ENCODE measurements at regions of chr9 and their contacts with region 1.

Region 1: GRCh38 chr9:125241000-125241862 is at the start of gene HSPA5:
- DNase-seq: peak; percentile 100
- ATAC-seq: peak; percentile 90
- H3K4me3 Mint-ChIP-seq: peak within 1 kb of the TSS; percentile 100
- H3K27ac Mint-ChIP-seq: peak within 1 kb of the TSS; percentile 100
- H3K4me1 Mint-ChIP-seq: peaks cover 45% of the 10 kb centered on the region
- H3K27me3 Mint-ChIP-seq: no peaks in the 10 kb centered on the region
- CTCF ChIP-seq: no peak
- total RNA-seq, gene HSPA5: 161 to 163 TPM

Region 2: GRCh38 chr9:124868511-124869465 is 372.4 kb before region 1 on chr9:
- CTCF ChIA-PET with region 1: no interaction called
- POLR2A ChIA-PET with region 1: interaction called, 20 read pairs
- intact Hi-C with region 1: no loop called
- DNase-seq: peak; percentile 92
- ATAC-seq: peak; percentile 54
- H3K4me3 Mint-ChIP-seq: peak overlapping the region; percentile 94
- H3K27ac Mint-ChIP-seq: peak overlapping the region; percentile 99
- H3K4me1 Mint-ChIP-seq: peaks cover 47% of the 10 kb centered on the region
- H3K27me3 Mint-ChIP-seq: no peaks in the 10 kb centered on the region
- CTCF ChIP-seq: peak; percentile 20

Region 3: DNA sequence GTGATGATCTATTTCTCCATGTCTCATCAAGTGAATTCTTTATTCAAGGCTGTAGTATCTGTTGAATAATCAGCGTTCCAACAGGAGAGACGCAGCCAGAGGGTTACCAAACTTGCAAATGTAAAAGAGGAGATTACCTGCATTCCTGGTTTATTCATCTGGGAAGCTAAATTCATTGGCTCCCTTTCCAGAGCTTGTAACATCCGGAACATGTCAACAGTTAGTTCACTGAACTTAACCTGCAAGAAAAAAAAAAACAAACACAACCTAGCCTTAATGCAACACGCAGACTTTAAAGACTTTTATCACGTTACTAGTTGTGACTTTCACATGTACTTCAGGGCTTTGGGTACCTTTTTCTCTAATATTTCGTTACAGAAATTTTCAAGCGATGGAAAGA is 237.9 kb before region 1 on chr9:
- CTCF ChIA-PET with region 1: no interaction called
- POLR2A ChIA-PET with region 1: no interaction called
- intact Hi-C with region 1: no loop called
- DNase-seq: no peak
- ATAC-seq: no peak
- H3K4me3 Mint-ChIP-seq: no peak overlapping the region
- H3K27ac Mint-ChIP-seq: no peak overlapping the region
- H3K4me1 Mint-ChIP-seq: no peaks in the 10 kb centered on the region
- H3K27me3 Mint-ChIP-seq: no peaks in the 10 kb centered on the region
- CTCF ChIP-seq: no peak

Region 4: GRCh38 chr9:125189361-125190289 is 51.6 kb before region 1 on chr9 and contains the start of gene PPP6C:
- CTCF ChIA-PET with region 1: interaction called, 3 read pairs
- POLR2A ChIA-PET with region 1: interaction called, 11 read pairs
- intact Hi-C with region 1: no loop called
- DNase-seq: peak; percentile 99
- ATAC-seq: peak; percentile 96
- H3K4me3 Mint-ChIP-seq: peak within 1 kb of the TSS; percentile 98
- H3K27ac Mint-ChIP-seq: peak within 1 kb of the TSS; percentile 98
- H3K4me1 Mint-ChIP-seq: peaks cover 54% of the 10 kb centered on the region
- H3K27me3 Mint-ChIP-seq: no peaks in the 10 kb centered on the region
- CTCF ChIP-seq: peak; percentile 75
- total RNA-seq, gene PPP6C: 43.1 to 44.8 TPM

Region 5: DNA sequence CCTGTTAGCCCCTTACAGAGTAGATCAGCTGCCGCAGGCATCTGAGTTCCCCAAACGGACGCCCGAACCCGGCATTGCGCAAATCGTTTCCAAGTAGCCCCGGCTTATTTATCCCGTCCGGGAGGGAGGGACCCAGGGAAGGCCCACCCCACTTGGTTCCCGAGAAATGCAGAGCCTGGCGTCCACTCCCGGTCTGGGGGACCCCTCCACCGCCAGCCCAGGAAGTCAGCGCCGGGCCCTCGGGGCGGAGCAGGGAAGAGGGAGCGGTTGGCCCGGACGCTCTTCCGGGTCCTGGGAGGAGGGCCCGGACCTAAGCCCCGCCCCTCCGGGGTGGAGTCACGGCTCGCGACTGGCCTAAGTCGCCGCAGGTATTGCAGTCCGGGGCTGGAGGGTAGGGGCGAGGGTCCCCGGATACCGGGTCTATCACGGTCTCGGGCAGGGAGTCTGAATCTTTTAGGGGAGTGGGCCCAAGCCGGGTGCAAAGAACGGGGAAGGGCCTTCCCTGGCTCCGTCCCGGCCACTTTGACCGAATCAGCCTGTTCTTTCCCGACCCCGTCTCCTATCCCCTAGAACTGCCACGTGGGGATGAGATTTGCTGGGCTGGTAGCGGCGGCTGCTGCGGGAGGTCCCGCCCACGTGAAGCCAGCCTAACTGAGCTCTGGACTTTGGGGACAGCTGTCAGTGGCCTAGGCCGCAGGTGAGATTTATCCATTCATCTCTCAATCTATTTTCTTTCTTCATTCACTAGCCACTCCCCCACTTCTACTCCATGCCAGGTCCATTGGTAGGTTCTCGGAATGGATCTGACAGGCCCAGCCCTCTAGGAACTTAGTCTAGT is 40.8 kb before region 1 on chr9 and contains the start of gene RABEPK:
- CTCF ChIA-PET with region 1: no interaction called
- POLR2A ChIA-PET with region 1: interaction called, 16 read pairs
- intact Hi-C with region 1: no loop called
- DNase-seq: peak; percentile 92
- ATAC-seq: peak; percentile 98
- H3K4me3 Mint-ChIP-seq: peak within 1 kb of the TSS; percentile 97
- H3K27ac Mint-ChIP-seq: peak within 1 kb of the TSS; percentile 91
- H3K4me1 Mint-ChIP-seq: peaks cover 36% of the 10 kb centered on the region
- H3K27me3 Mint-ChIP-seq: no peaks in the 10 kb centered on the region
- CTCF ChIP-seq: no peak
- total RNA-seq, gene RABEPK: 30.0 to 30.4 TPM

Region 6: GRCh38 chr9:125227761-125228160 is 13.5 kb before region 1 on chr9:
- CTCF ChIA-PET with region 1: interaction called, 3 read pairs
- POLR2A ChIA-PET with region 1: interaction called, 16 read pairs
- intact Hi-C with region 1: no loop called
- DNase-seq: no peak
- ATAC-seq: no peak
- H3K4me3 Mint-ChIP-seq: no peak overlapping the region
- H3K27ac Mint-ChIP-seq: no peak overlapping the region
- H3K4me1 Mint-ChIP-seq: no peaks in the 10 kb centered on the region
- H3K27me3 Mint-ChIP-seq: no peaks in the 10 kb centered on the region
- CTCF ChIP-seq: no peak

Region 7: GRCh38 chr9:125261501-125262293 is 20.5 kb after region 1 on chr9 and contains the start of gene GAPVD1:
- CTCF ChIA-PET with region 1: interaction called, 7 read pairs
- POLR2A ChIA-PET with region 1: interaction called, 151 read pairs
- intact Hi-C with region 1: no loop called
- DNase-seq: peak; percentile 91
- ATAC-seq: peak; percentile 97
- H3K4me3 Mint-ChIP-seq: peak within 1 kb of the TSS; percentile 100
- H3K27ac Mint-ChIP-seq: peak within 1 kb of the TSS; percentile 96
- H3K4me1 Mint-ChIP-seq: peaks cover 33% of the 10 kb centered on the region
- H3K27me3 Mint-ChIP-seq: no peaks in the 10 kb centered on the region
- CTCF ChIP-seq: peak; percentile 52
- total RNA-seq, gene GAPVD1: 49.7 to 49.8 TPM

Region 8: DNA sequence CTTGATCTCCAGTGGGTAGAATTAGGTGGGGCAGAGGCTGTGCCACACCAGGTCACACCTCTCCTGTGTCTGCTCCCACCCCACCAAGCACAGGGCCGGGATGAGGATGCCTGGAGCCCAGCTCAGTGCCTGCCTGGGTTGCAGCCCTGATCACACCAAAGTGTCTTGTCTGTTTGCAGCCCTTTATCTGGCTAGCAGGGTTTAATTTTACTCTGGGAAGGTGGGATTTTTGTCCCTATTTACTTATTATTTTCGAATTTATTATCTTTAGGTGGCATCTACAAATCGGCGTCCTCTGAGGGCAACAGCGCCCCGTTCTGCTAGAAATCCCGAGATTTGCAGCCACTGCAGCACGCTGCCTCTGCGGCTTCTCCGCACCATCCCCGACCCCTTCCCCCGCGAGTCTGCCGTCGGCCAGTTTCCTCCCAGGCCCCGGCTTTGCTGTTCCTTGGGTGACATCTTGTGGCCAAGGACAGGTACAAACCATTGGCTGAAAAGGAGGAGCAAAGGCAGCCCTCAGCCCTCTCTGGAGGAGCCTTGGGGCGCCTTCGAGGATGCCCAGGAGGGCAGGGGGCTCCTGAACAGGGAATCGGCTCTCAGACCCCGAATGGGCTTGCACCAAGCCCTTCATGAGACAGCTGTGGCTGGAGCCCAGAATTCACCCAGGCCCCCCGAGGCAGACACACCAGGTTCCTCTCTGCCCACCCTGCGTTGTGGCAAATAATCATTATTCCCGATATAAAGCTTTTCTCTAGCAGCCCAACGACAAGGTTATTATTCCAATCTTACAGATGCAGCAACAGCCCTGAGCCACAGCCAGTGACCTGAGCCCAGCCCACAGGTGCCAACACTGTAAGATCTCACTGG is 133.4 kb after region 1 on chr9:
- CTCF ChIA-PET with region 1: interaction called, 3 read pairs
- POLR2A ChIA-PET with region 1: no interaction called
- intact Hi-C with region 1: loop called (anchors 10 kb)
- DNase-seq: peak; percentile 74
- ATAC-seq: peak; percentile 97
- H3K4me3 Mint-ChIP-seq: peak overlapping the region; percentile 47
- H3K27ac Mint-ChIP-seq: no peak overlapping the region
- H3K4me1 Mint-ChIP-seq: peaks cover 10% of the 10 kb centered on the region
- H3K27me3 Mint-ChIP-seq: peaks cover 8% of the 10 kb centered on the region
- CTCF ChIP-seq: peak; percentile 76

Measured in activated CD8-positive, alpha-beta T cell treated with anti-CD3 and anti-CD28 coated beads for 36 hours (primary cell).